T-cell (primary cell): ENCODE measurements at regions of chr12 and their contacts with region 1.

Region 1: GRCh38 chr12:95998611-95999286 is 2.6 kb upstream of the HAL start:
- DNase-seq: peak in 33 of 35 experiments; percentile 3 to 74 (median 32)
- ATAC-seq: peak; percentile 84 to 99 (median 93)
- H3K4me3 ChIP-seq: no peak overlapping the region
- H3K4me3 Mint-ChIP-seq: no peak overlapping the region
- H3K27ac ChIP-seq: no peak overlapping the region
- H3K27ac Mint-ChIP-seq: peak overlapping the region; percentile 1 to 56
- H3K4me1 ChIP-seq: no peaks in the 10 kb centered on the region
- H3K4me1 Mint-ChIP-seq: peaks cover 3 to 5% (median 3%) of the 10 kb centered on the region in 3 donors
- H3K27me3 ChIP-seq: no peaks in the 10 kb centered on the region
- H3K27me3 Mint-ChIP-seq: no peaks in the 10 kb centered on the region

Region 2: GRCh38 chr12:95918194-95918993 is 80.4 kb before region 1 on chr12:
- CTCF ChIA-PET with region 1: interaction called, 50 to 86 read pairs
- POLR2A ChIA-PET with region 1: no interaction called
- DNase-seq: peak in 32 of 35 experiments; percentile 1 to 75 (median 25)
- ATAC-seq: peak; percentile 86 to 97 (median 92)
- H3K4me3 ChIP-seq: no peak overlapping the region
- H3K4me3 Mint-ChIP-seq: no peak overlapping the region
- H3K27ac ChIP-seq: no peak overlapping the region
- H3K27ac Mint-ChIP-seq: no peak overlapping the region
- H3K4me1 ChIP-seq: no peaks in the 10 kb centered on the region
- H3K4me1 Mint-ChIP-seq: no peaks in the 10 kb centered on the region
- H3K27me3 ChIP-seq: peaks cover 0 to 3% of the 10 kb centered on the region in 2 experiments
- H3K27me3 Mint-ChIP-seq: peaks cover 0 to 1% of the 10 kb centered on the region in 2 donors

Region 3: GRCh38 chr12:95942524-95943329 is 56.0 kb before region 1 on chr12 and contains the start of gene CCDC38:
- CTCF ChIA-PET with region 1: interaction called, 3 to 16 read pairs
- POLR2A ChIA-PET with region 1: no interaction called
- DNase-seq: peak; percentile 65 to 88 (median 78)
- ATAC-seq: peak; percentile 94 to 96 (median 94)
- H3K4me3 ChIP-seq: peak within 1 kb of the TSS; percentile 94
- H3K4me3 Mint-ChIP-seq: peak within 1 kb of the TSS; percentile 91 to 96 (median 94)
- H3K27ac ChIP-seq: peak within 1 kb of the TSS; percentile 82
- H3K27ac Mint-ChIP-seq: peak within 1 kb of the TSS; percentile 85 to 92
- H3K4me1 ChIP-seq: peaks cover 0 to 15% of the 10 kb centered on the region in 2 experiments
- H3K4me1 Mint-ChIP-seq: peaks cover 5 to 12% (median 9%) of the 10 kb centered on the region in 3 donors
- H3K27me3 ChIP-seq: no peaks in the 10 kb centered on the region
- H3K27me3 Mint-ChIP-seq: no peaks in the 10 kb centered on the region
- total RNA-seq, gene CCDC38: 0.14 to 1.4 (median 0.49) TPM in 3 of 5 donors, not detected in the others

Region 4: DNA sequence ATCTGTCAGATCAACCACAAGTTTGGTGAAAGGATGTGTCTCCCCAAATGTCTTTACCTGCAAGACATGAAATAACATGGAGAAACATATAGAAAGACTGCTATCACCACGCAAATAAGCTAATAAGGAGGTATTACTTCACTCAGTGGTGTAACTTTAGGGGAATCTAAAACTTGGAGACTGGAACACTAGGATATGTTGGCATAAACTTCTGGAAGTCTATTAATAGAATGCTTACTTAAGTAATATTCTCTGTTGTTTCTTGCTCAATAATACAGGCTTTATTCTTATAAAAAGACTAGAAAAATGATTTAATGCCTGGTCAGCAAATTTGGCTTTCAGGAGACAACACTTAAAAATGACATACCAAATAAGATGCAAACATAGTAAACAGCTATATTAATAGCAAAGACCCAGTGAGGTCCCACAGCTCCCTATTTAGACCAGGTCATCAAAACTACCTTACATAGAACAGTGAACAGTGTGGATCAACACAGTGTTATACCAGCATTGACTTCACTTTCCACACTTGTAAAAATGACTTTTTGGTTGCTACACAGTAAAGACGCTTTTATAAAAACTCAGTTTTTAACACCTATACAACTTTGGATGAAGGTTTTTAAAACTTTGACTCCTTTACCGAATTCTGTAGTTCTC is 16.3 kb after region 1 on chr12:
- CTCF ChIA-PET with region 1: interaction called, 3 to 10 read pairs
- POLR2A ChIA-PET with region 1: no interaction called
- DNase-seq: no peak
- ATAC-seq: no peak
- H3K4me3 ChIP-seq: no peak overlapping the region
- H3K4me3 Mint-ChIP-seq: no peak overlapping the region
- H3K27ac ChIP-seq: no peak overlapping the region
- H3K27ac Mint-ChIP-seq: no peak overlapping the region
- H3K4me1 ChIP-seq: no peaks in the 10 kb centered on the region
- H3K4me1 Mint-ChIP-seq: no peaks in the 10 kb centered on the region
- H3K27me3 ChIP-seq: no peaks in the 10 kb centered on the region
- H3K27me3 Mint-ChIP-seq: no peaks in the 10 kb centered on the region